SK-N-SH (cell line): ENCODE measurements at regions of chr19 and their contacts with region 1.

Region 1: GRCh38 chr19:43651758-43652545 is 12.3 kb upstream of the CADM4 start:
- DNase-seq: peak; percentile 72
- H3K4me3 ChIP-seq: no peak overlapping the region; a peak in 1 of 4 replicates
- H3K27ac ChIP-seq: no peak overlapping the region; a peak in 1 of 4 replicates
- H3K4me1 ChIP-seq: no peaks in the 10 kb centered on the region
- H3K27me3 ChIP-seq: no peaks in the 10 kb centered on the region
- CTCF ChIP-seq: peak; percentile 70
- EP300 ChIP-seq: no peak
- RAD21 ChIP-seq: peak; percentile 81

Region 2: GRCh38 chr19:43532962-43533545 is 118.9 kb before region 1 on chr19 and contains the start of gene ZNF575:
- CTCF ChIA-PET with region 1: interaction called, 10 read pairs
- POLR2A ChIA-PET with region 1: no interaction called
- DNase-seq: peak; percentile 93
- H3K4me3 ChIP-seq: peak within 1 kb of the TSS; percentile 59 to 63
- H3K27ac ChIP-seq: peak within 1 kb of the TSS; percentile 78 to 95
- H3K4me1 ChIP-seq: peaks cover 0 to 10% of the 10 kb centered on the region in 2 experiments; a peak in 1 of 4 replicates
- H3K27me3 ChIP-seq: no peaks in the 10 kb centered on the region
- CTCF ChIP-seq: no peak
- EP300 ChIP-seq: no peak; a peak in 1 of 4 replicates
- RAD21 ChIP-seq: no peak
- polyA plus RNA-seq, gene ZNF575: 0.31 and 1.0 TPM in 2 replicates

Region 3: DNA sequence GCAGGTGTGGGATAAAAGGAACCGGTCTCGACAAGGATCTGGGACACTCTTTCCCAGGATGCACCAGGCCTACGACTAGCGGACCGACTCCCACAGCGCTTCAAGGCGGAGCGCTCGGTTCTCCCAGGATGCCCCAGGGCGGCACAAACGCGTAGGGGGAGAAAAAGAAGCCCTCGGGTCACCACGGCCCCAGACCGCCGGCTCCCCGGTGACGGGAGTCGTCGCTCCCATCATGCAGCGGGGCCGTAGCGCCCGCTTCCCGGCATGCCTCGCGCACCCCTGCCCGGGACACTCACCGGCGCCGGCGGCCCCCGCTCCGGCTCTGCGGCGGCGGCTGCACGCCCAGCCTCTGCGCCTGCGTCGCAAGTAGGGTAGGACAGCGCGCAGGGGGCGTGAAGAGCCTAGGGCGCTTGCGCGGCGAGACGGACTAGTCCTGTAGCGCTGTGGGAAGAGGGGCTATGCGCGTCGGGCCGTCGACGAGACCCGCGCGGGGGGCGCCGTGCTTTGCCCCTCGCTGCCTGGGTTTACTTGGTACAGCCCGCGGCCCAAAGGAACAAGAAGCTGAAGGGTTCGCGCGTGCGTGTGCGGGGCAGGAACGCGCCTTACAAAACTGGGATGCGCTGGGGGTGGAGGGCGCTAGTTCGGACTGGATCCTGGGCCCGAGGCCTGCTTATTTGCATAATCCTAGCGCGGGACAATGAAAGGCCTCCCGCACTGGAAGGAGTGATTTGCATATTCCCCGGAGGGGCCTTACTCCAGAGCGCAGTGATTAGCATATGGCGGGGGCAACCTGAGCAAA is 32.5 kb before region 1 on chr19 and contains the start of gene ZNF428:
- CTCF ChIA-PET with region 1: no interaction called
- POLR2A ChIA-PET with region 1: no interaction called
- DNase-seq: peak; percentile 95
- H3K4me3 ChIP-seq: peak within 1 kb of the TSS; percentile 68 to 72
- H3K27ac ChIP-seq: peak within 1 kb of the TSS; percentile 74 to 98
- H3K4me1 ChIP-seq: peaks cover 7 to 12% of the 10 kb centered on the region in 2 experiments; a peak in 2 of 4 replicates
- H3K27me3 ChIP-seq: no peaks in the 10 kb centered on the region
- CTCF ChIP-seq: no peak
- EP300 ChIP-seq: peak in 1 of 2 experiments; percentile 9; a peak in 1 of 4 replicates
- RAD21 ChIP-seq: no peak
- polyA plus RNA-seq, gene ZNF428: 60.9 and 79.5 TPM in 2 replicates

Region 4: DNA sequence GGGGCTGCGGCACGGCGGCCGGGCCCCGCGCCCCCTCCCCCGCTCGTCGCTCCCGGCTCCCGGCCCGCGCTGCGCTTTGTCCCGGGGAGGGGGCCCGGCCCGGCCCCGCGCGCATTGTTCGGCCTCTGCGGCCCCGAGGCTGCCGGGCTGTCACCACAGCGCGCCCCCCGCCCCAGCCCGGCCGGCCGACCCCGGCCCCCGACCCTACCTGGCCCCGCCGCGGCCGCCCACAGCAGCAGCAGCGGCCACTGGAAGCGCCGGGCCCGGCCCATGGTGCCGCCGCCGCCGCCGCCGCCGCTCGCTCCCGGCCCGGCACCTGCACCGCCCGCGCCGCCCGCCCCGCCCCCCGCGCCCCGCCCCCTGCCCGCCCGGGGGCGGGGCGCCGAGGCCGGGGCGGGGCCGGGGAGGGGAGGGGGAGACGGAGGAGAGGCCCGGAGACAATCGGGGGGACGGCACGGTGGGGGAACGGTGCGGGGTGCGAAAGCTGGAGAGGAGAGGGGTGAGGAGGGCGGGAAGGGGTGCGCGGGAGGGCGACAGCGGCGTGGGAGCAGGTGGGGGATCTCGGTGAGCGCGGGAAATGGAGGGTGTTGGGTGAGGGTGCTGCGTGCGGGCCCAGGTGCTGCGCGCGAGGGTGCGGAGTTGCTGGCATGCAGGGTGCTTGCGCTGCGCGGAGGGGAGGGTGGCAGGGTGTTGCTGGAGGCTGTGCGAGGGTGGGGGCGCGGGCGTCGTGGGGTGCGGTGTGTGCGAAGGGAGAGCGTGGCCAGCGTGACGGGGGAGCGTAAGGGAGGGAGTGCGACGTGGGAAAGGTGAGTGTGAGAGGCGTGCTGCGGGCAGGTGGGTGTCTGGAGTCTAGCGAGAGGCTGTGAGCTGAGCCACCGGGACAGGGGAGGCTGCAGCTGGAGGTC is 12.2 kb before region 1 on chr19 and contains the start of gene CADM4:
- CTCF ChIA-PET with region 1: interaction called, 10 read pairs
- POLR2A ChIA-PET with region 1: no interaction called
- DNase-seq: peak; percentile 93
- H3K4me3 ChIP-seq: peak within 1 kb of the TSS; percentile 50 to 59
- H3K27ac ChIP-seq: no peak within 1 kb of the TSS; a peak in 1 of 4 replicates
- H3K4me1 ChIP-seq: peaks cover 0 to 14% of the 10 kb centered on the region in 2 experiments; a peak in 1 of 4 replicates
- H3K27me3 ChIP-seq: no peaks in the 10 kb centered on the region; the same call in 1 of the 2 replicates
- CTCF ChIP-seq: no peak
- EP300 ChIP-seq: no peak
- RAD21 ChIP-seq: no peak
- polyA plus RNA-seq, gene CADM4: 21.4 and 28.9 TPM in 2 replicates

Region 5: GRCh38 chr19:43667573-43668405 is 15.8 kb after region 1 on chr19:
- CTCF ChIA-PET with region 1: interaction called, 10 read pairs
- POLR2A ChIA-PET with region 1: no interaction called
- DNase-seq: no peak
- H3K4me3 ChIP-seq: peak overlapping the region; percentile 56 to 76
- H3K27ac ChIP-seq: peak overlapping the region; percentile 20 to 53; a peak in 2 of 4 replicates
- H3K4me1 ChIP-seq: peaks cover 4 to 12% of the 10 kb centered on the region in 2 experiments; a peak in 2 of 4 replicates
- H3K27me3 ChIP-seq: no peaks in the 10 kb centered on the region
- CTCF ChIP-seq: no peak
- EP300 ChIP-seq: no peak
- RAD21 ChIP-seq: no peak